Sigmoid colon (tissue), 7 donors: ENCODE measurements at regions of chr12 and their contacts with region 1.

Region 1: GRCh38 chr12:71780237-71780822 is 25.7 kb downstream of the RAB21 start:
- DNase-seq: no peak
- H3K4me3 ChIP-seq: no peak overlapping the region
- H3K27ac ChIP-seq: peak overlapping the region in 2 of 4 donors; percentile 14 to 25
- H3K4me1 ChIP-seq: peaks cover 0 to 14% (median 3%) of the 10 kb centered on the region in 4 donors
- H3K27me3 ChIP-seq: no peaks in the 10 kb centered on the region
- CTCF ChIP-seq: peak; percentile 27 to 63 (median 60)
- EP300 ChIP-seq: no peak
- POLR2A ChIP-seq: no peak

Region 2: GRCh38 chr12:71840231-71840847 is 60.0 kb after region 1 on chr12:
- intact Hi-C with region 1: loop called (anchors 2 kb)
- DNase-seq: no peak
- H3K4me3 ChIP-seq: peak overlapping the region; percentile 56 to 75 (median 71)
- H3K27ac ChIP-seq: peak overlapping the region; percentile 84 to 96 (median 94)
- H3K4me1 ChIP-seq: peaks cover 0 to 44% (median 34%) of the 10 kb centered on the region in 4 donors
- H3K27me3 ChIP-seq: no peaks in the 10 kb centered on the region
- CTCF ChIP-seq: no peak
- EP300 ChIP-seq: no peak
- POLR2A ChIP-seq: no peak